Gastrocnemius medialis (tissue), 4 donors: ENCODE measurements at regions of chr17 and their contacts with region 1.

Region 1: DNA sequence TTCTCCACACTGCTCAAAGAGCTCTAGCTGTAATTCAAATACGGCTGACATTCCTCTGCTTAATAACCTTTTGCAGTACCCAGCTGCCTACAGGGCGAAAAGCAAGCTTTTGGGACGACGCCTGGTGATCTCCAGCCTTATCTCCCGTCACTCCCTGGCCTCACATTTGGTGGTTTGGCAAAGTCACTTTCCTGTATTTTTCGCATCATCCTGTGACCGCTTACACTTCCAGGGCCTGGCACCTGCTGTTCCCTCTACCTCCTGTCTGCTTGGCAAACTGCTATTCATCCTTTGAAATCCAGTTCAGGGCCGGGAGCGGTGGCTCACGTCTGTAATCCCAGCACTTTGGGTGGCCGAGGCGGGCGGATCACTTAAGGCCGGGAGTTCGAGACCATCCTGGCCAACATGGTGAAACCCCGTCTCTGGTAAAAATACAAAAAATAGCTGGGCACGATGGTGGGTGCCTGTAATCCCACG is 2.7 kb upstream of the BHLHA9 start:
- DNase-seq: peak; percentile 14 to 42
- ATAC-seq: peak; percentile 29 to 58
- H3K4me3 ChIP-seq: peak overlapping the region; percentile 66 to 82 (median 81)
- H3K27ac ChIP-seq: peak overlapping the region; percentile 82 to 85 (median 84)
- H3K4me1 ChIP-seq: peaks cover 0 to 6% of the 10 kb centered on the region in 2 donors
- H3K27me3 ChIP-seq: peaks cover 12 to 20% (median 16%) of the 10 kb centered on the region in 3 donors
- CTCF ChIP-seq: no peak
- POLR2A ChIP-seq: no peak

Region 2: DNA sequence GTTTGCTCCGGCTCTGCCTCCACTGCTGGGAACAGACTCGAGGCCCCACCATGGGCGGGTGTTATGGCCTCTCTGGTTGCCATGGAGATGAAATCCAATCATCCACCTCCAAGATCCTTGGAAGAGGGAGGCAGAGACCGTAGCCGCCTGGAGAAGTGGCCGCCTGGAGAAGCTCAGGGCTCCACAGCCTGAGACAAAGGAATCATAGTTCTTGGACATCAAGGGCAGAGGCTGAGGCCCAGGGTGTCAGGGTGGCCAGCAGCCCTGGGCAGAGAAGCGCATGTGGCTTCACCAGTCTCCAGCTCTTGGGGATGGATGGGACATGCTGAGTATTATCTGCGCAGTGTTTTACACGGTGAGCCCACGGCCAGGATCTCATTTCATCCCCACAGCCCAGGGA is 123.9 kb before region 1 on chr17:
- in situ Hi-C with region 1: no loop called
- intact Hi-C with region 1: no loop called
- DNase-seq: no peak
- ATAC-seq: no peak
- H3K4me3 ChIP-seq: no peak overlapping the region
- H3K27ac ChIP-seq: no peak overlapping the region
- H3K4me1 ChIP-seq: no peaks in the 10 kb centered on the region
- H3K27me3 ChIP-seq: peaks cover 0 to 5% (median 0%) of the 10 kb centered on the region in 3 donors
- CTCF ChIP-seq: no peak
- POLR2A ChIP-seq: no peak

Region 3: DNA sequence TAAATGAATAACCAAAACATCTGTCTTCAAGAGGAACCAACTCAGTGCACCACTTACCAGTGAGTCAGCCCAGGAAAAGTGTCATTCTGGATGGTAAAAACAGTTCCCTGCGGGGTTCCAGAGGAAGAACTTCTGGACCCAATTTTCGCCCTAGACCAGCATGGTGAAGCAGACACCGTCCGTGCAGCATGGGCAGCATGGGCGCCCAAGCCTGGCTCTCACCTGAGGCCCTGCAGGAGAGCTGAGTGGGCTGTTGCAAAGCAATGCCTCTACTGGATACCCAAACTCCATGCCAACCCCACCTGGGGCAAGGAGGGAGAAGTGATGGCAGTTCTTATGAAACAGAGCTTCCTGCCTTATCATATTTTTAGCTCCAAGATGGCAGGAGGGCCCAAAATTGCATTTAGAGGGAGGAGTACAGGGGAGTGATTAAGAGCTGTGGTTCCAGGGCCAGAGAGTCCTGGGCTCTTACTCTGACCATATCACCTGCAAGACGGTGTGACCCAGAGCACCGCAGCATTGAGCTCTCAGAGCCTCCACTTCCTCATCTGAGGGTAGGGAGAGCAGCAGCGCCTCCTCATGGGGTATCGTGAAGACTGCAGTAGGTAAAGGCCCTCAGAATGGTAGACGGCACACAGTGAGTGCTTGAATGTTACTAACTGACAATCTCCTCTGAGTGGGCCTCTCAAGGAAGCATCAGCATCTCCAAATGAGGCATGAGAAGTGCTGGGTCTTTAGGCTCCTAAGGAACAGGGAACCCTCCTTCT is 265.5 kb after region 1 on chr17:
- in situ Hi-C with region 1: loop called in 1 of 4 experiments (anchors 25 kb)
- intact Hi-C with region 1: no loop called
- DNase-seq: peak in 1 of 2 donors; percentile 51
- ATAC-seq: peak; percentile 48 to 91
- H3K4me3 ChIP-seq: no peak overlapping the region
- H3K27ac ChIP-seq: peak overlapping the region; percentile 20 to 63 (median 40)
- H3K4me1 ChIP-seq: peaks cover 0 to 8% of the 10 kb centered on the region in 2 donors
- H3K27me3 ChIP-seq: no peaks in the 10 kb centered on the region
- CTCF ChIP-seq: peak in 4 of 5 experiments; percentile 38 to 56 (median 50)
- POLR2A ChIP-seq: no peak